ENCODE measurements at regions of chr9 and their contacts with region 1.

Region 1: DNA sequence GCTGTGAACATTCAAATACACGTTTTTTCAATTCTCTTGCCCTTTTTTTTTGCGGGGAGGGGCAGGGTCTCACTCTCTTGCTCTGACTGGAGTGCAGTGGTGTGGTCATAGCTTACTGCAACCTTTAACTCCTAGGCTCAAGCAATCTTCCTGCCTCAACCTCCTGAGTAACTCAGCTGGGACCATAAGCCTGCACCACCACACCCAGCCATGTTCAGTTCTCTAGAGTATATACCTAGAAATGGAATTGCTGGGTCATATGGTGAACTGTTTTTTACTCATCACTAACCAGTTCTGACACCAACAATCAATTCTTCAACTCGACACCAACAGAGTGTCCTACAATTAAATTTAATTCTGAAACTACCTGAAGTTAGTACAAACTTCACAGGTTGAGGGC is 85.5 kb upstream of the ZNF169 start:
- DNase-seq: no peak
- H3K4me3 ChIP-seq: no peak overlapping the region
- H3K27ac ChIP-seq: no peak overlapping the region
- H3K4me1 ChIP-seq: peaks cover 0 to 12% (median under 1%) of the 10 kb centered on the region in 4 experiments; a peak in 2 of 7 replicates
- H3K27me3 ChIP-seq: no peaks in the 10 kb centered on the region
- CTCF ChIP-seq: no peak
- EP300 ChIP-seq: no peak
- POLR2A ChIP-seq: no peak; a peak in 1 of 3 replicates
- RAD21 ChIP-seq: no peak

Region 2: GRCh38 chr9:93682232-93682968 is 491.2 kb before region 1 on chr9:
- CTCF ChIA-PET with region 1: no interaction called
- POLR2A ChIA-PET with region 1: no interaction called
- DNase-seq: peak; percentile 60 to 99
- H3K4me3 ChIP-seq: no peak overlapping the region
- H3K27ac ChIP-seq: peak overlapping the region; percentile 56; the same call in 1 of the 2 replicates
- H3K4me1 ChIP-seq: no peaks in the 10 kb centered on the region
- H3K27me3 ChIP-seq: no peaks in the 10 kb centered on the region
- CTCF ChIP-seq: peak in 2 of 3 experiments; percentile 82 to 92; a peak in 3 of 4 replicates
- EP300 ChIP-seq: peak in 1 of 2 experiments; percentile 66; a peak in 1 of 3 replicates
- POLR2A ChIP-seq: no peak
- RAD21 ChIP-seq: peak; percentile 95 to 98

Region 3: GRCh38 chr9:94110821-94111252 is 62.8 kb before region 1 on chr9:
- CTCF ChIA-PET with region 1: no interaction called
- POLR2A ChIA-PET with region 1: no interaction called
- DNase-seq: no peak
- H3K4me3 ChIP-seq: no peak overlapping the region
- H3K27ac ChIP-seq: no peak overlapping the region
- H3K4me1 ChIP-seq: 0 out of 7 replicates have a peak, but pooled peaks cover 0 to 2% (median 0%) of the 10 kb centered on the region in 4 experiments
- H3K27me3 ChIP-seq: no peaks in the 10 kb centered on the region; a peak in 1 of 7 replicates
- CTCF ChIP-seq: no peak
- EP300 ChIP-seq: no peak
- POLR2A ChIP-seq: no peak
- RAD21 ChIP-seq: no peak

Region 4: DNA sequence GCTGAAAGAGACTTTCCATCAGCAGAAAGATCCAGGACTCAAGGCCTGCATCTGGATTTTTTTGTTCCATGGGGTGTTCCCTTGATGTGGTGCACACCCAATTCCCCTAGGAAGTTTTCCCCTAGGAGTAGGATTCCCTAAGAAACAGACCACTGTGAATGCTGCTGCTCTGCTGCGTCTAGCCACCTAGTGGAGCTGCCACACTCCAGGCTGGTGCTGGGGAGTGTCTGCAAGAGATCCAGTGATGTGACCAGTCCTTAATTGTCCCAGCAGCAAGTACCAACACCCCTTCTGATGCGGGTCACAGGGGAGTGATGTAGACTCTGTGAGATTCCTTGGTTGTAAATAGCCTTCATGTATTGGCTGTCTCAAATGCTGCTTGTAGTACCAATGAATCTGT is 24.0 kb after region 1 on chr9:
- CTCF ChIA-PET with region 1: no interaction called
- POLR2A ChIA-PET with region 1: interaction called, 18 read pairs
- DNase-seq: no peak
- H3K4me3 ChIP-seq: no peak overlapping the region
- H3K27ac ChIP-seq: no peak overlapping the region
- H3K4me1 ChIP-seq: no peaks in the 10 kb centered on the region
- H3K27me3 ChIP-seq: no peaks in the 10 kb centered on the region
- CTCF ChIP-seq: peak in 2 of 3 experiments; percentile 9 to 15; a peak in 2 of 4 replicates
- EP300 ChIP-seq: no peak
- POLR2A ChIP-seq: no peak
- RAD21 ChIP-seq: peak in 1 of 2 experiments; percentile 18; a peak in 1 of 4 replicates

Measured in H1 (cell line).